CD8-positive, alpha-beta T cell (primary cell): ENCODE measurements at regions of chr5 and their contacts with region 1.

Region 1: GRCh38 chr5:34929150-34929719 is at the start of gene DNAJC21:
- DNase-seq: peak; percentile 94 to 99 (median 96)
- ATAC-seq: peak; percentile 90
- H3K4me3 ChIP-seq: peak within 1 kb of the TSS; percentile 72 to 87
- H3K4me3 Mint-ChIP-seq: peak within 1 kb of the TSS; percentile 97
- H3K27ac ChIP-seq: peak within 1 kb of the TSS; percentile 72 to 83
- H3K27ac Mint-ChIP-seq: peak within 1 kb of the TSS; percentile 94
- H3K4me1 ChIP-seq: peaks cover 27% of the 10 kb centered on the region
- H3K4me1 Mint-ChIP-seq: peaks cover 37% of the 10 kb centered on the region
- H3K27me3 ChIP-seq: no peaks in the 10 kb centered on the region
- H3K27me3 Mint-ChIP-seq: no peaks in the 10 kb centered on the region
- CTCF ChIP-seq: no peak
- total RNA-seq, gene DNAJC21: 55.7 to 56.6 TPM

Region 2: GRCh38 chr5:34007621-34008600 is 921.3 kb before region 1 on chr5 and contains the start of gene AMACR:
- CTCF ChIA-PET with region 1: no interaction called
- POLR2A ChIA-PET with region 1: no interaction called
- intact Hi-C with region 1: loop called in 1 of 2 experiments (anchors 2 kb)
- DNase-seq: peak; percentile 58 to 95 (median 89)
- ATAC-seq: peak; percentile 83
- H3K4me3 ChIP-seq: peak within 1 kb of the TSS; percentile 72 to 76
- H3K4me3 Mint-ChIP-seq: peak within 1 kb of the TSS; percentile 97
- H3K27ac ChIP-seq: peak within 1 kb of the TSS; percentile 67 to 78
- H3K27ac Mint-ChIP-seq: peak within 1 kb of the TSS; percentile 94
- H3K4me1 ChIP-seq: peaks cover 16% of the 10 kb centered on the region
- H3K4me1 Mint-ChIP-seq: peaks cover 21% of the 10 kb centered on the region
- H3K27me3 ChIP-seq: no peaks in the 10 kb centered on the region
- H3K27me3 Mint-ChIP-seq: no peaks in the 10 kb centered on the region
- CTCF ChIP-seq: no peak
- total RNA-seq, gene AMACR: 1.2 to 1.5 TPM

Region 3: GRCh38 chr5:34838785-34839714 is 90.2 kb before region 1 on chr5 and contains the start of gene TTC23L:
- CTCF ChIA-PET with region 1: no interaction called
- POLR2A ChIA-PET with region 1: interaction called, 9 read pairs
- intact Hi-C with region 1: loop called in 1 of 2 experiments (anchors 1 kb)
- DNase-seq: peak; percentile 77 to 97 (median 91)
- ATAC-seq: peak; percentile 90
- H3K4me3 ChIP-seq: peak within 1 kb of the TSS; percentile 73 to 74
- H3K4me3 Mint-ChIP-seq: peak within 1 kb of the TSS; percentile 95
- H3K27ac ChIP-seq: peak within 1 kb of the TSS; percentile 57 to 80
- H3K27ac Mint-ChIP-seq: peak within 1 kb of the TSS; percentile 96
- H3K4me1 ChIP-seq: peaks cover 3% of the 10 kb centered on the region
- H3K4me1 Mint-ChIP-seq: peaks cover 10% of the 10 kb centered on the region
- H3K27me3 ChIP-seq: peaks cover 0 to 3% of the 10 kb centered on the region in 2 experiments
- H3K27me3 Mint-ChIP-seq: no peaks in the 10 kb centered on the region
- CTCF ChIP-seq: no peak
- total RNA-seq, gene TTC23L: not detected

Region 4: DNA sequence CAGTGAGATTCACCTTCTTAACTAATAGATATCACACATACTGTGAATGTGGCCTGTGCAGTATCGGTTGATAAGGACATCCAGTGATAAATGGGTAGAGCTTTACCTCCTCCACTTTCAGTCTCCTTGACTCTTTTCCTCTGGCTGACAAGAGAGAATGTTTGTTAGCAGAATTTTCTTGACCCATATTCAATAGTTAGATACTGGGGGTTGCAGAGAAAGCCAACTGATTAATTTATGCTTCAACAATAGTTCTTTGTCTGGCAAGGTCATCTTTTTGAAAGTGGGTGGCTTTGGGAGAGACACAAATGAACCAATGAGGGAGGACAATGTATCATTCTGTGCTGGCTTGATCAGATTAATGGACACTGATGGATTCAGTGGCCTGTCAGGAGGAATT is 60.0 kb before region 1 on chr5:
- CTCF ChIA-PET with region 1: no interaction called
- POLR2A ChIA-PET with region 1: no interaction called
- intact Hi-C with region 1: no loop called
- DNase-seq: no peak
- ATAC-seq: no peak
- H3K4me3 ChIP-seq: no peak overlapping the region
- H3K4me3 Mint-ChIP-seq: no peak overlapping the region
- H3K27ac ChIP-seq: no peak overlapping the region
- H3K27ac Mint-ChIP-seq: no peak overlapping the region
- H3K4me1 ChIP-seq: no peaks in the 10 kb centered on the region
- H3K4me1 Mint-ChIP-seq: no peaks in the 10 kb centered on the region
- H3K27me3 ChIP-seq: no peaks in the 10 kb centered on the region
- H3K27me3 Mint-ChIP-seq: no peaks in the 10 kb centered on the region
- CTCF ChIP-seq: no peak

Region 5: GRCh38 chr5:34915139-34915855 is 13.9 kb before region 1 on chr5 and contains the starts of genes BRIX1 and RAD1:
- CTCF ChIA-PET with region 1: interaction called, 10 read pairs
- POLR2A ChIA-PET with region 1: interaction called, 103 read pairs
- intact Hi-C with region 1: loop called (anchors 1 kb)
- DNase-seq: peak; percentile 83 to 97 (median 93)
- ATAC-seq: peak; percentile 94
- H3K4me3 ChIP-seq: peak within 1 kb of the TSS; percentile 76 to 97
- H3K4me3 Mint-ChIP-seq: no peak within 1 kb of the TSS
- H3K27ac ChIP-seq: peak within 1 kb of the TSS; percentile 79 to 86
- H3K27ac Mint-ChIP-seq: no peak within 1 kb of the TSS
- H3K4me1 ChIP-seq: peaks cover 24% of the 10 kb centered on the region
- H3K4me1 Mint-ChIP-seq: peaks cover 37% of the 10 kb centered on the region
- H3K27me3 ChIP-seq: no peaks in the 10 kb centered on the region
- H3K27me3 Mint-ChIP-seq: no peaks in the 10 kb centered on the region
- CTCF ChIP-seq: no peak
- total RNA-seq, gene BRIX1: 34.9 to 40.9 TPM
- total RNA-seq, gene RAD1: 34.7 to 35.4 TPM

Region 6: DNA sequence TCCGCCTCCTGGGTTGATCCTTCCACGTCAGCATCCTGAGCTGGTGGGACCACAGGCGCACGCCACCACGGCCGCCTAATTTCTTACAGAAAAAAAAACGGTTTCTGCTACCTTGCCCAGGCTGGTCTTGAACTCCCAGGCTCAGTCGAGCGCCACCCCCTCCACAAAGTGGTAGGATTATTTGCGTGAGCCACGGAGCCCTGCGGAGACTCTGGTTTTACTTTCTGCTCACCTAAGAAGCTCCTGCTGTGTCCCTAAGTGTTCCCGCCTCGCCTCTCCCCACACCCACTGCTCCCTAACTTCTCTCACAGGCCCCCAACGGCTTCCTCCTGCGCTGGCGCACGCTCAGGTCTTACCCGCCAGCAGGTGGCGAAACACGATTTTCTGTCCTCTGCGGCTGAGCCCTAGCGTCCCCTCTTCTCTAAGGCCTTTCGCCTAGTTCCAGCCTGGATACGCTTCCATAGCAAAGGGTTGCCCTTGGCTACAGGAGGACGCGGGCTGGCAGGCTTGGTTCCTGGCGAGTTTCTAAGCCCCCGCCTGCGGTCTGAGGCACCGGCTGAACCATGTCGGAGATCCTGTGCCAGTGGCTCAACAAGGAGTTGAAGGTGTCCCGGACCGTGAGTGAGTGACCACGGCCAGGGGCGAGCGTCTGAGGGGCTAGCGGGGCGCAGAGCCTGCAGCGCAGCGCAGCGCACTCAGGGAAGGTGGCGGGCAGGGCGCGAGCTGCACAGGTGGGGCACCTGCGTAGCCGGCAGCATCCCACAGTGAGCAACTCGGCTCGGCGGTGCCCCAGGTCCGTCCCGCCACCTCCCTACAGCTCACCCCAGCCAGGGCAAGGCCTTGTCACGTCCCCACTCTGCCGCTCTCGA is 688.4 kb after region 1 on chr5 and contains the start of gene SPEF2:
- CTCF ChIA-PET with region 1: no interaction called
- POLR2A ChIA-PET with region 1: interaction called, 3 read pairs
- intact Hi-C with region 1: loop called in 1 of 2 experiments (anchors 5 kb)
- DNase-seq: peak; percentile 54 to 90 (median 80)
- ATAC-seq: peak; percentile 84
- H3K4me3 ChIP-seq: peak within 1 kb of the TSS; percentile 84 to 88
- H3K4me3 Mint-ChIP-seq: peak within 1 kb of the TSS; percentile 91
- H3K27ac ChIP-seq: peak within 1 kb of the TSS; percentile 60 to 63
- H3K27ac Mint-ChIP-seq: peak within 1 kb of the TSS; percentile 95
- H3K4me1 ChIP-seq: peaks cover 16% of the 10 kb centered on the region
- H3K4me1 Mint-ChIP-seq: peaks cover 31% of the 10 kb centered on the region
- H3K27me3 ChIP-seq: no peaks in the 10 kb centered on the region
- H3K27me3 Mint-ChIP-seq: no peaks in the 10 kb centered on the region
- CTCF ChIP-seq: peak; percentile 78
- total RNA-seq, gene SPEF2: 3.5 to 4.7 TPM

Region 7: GRCh38 chr5:36151434-36152323 is 1222.4 kb after region 1 on chr5 and contains the starts of genes LMBRD2 and SKP2:
- CTCF ChIA-PET with region 1: no interaction called
- POLR2A ChIA-PET with region 1: interaction called, 5 read pairs
- intact Hi-C with region 1: loop called (anchors 1 to 5 kb)
- DNase-seq: peak; percentile 94 to 99 (median 96)
- ATAC-seq: peak; percentile 95
- H3K4me3 ChIP-seq: peak within 1 kb of the TSS; percentile 82 to 94
- H3K4me3 Mint-ChIP-seq: peak within 1 kb of the TSS; percentile 92
- H3K27ac ChIP-seq: peak within 1 kb of the TSS; percentile 79 to 84
- H3K27ac Mint-ChIP-seq: peak within 1 kb of the TSS; percentile 91
- H3K4me1 ChIP-seq: peaks cover 34% of the 10 kb centered on the region
- H3K4me1 Mint-ChIP-seq: peaks cover 70% of the 10 kb centered on the region
- H3K27me3 ChIP-seq: no peaks in the 10 kb centered on the region
- H3K27me3 Mint-ChIP-seq: no peaks in the 10 kb centered on the region
- CTCF ChIP-seq: no peak
- total RNA-seq, gene LMBRD2: 2.2 to 2.4 TPM
- total RNA-seq, gene SKP2: 5.5 to 6.1 TPM

Region 8: DNA sequence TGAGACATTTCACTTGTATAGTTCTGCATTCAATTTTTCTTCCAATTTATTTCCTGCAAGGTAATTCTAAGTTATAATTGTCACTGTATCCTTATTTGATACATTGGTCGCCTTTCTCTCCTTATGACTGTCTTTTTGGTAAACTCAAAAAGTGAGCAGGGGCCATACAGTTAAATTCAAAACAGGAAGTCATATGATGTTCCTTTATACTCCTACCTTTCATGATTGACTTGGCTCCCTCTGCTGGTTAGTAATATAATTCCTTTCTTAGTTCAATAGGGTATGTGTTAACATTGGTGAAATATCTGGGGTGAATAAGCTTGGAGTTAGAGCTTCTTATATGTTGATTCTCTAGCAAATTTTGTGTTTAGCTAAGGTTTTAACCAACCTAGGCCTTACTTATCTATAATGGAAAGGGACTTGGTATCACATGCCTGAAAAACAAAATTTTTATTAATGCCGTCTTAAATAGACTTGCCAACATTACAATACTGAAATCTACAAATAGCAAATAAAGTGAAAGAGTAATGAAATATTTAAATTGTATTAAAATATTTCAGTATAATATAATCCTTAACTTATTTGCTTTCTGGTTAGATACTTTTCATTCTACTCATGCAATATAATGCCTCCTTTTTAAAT is 1941.3 kb after region 1 on chr5:
- CTCF ChIA-PET with region 1: no interaction called
- POLR2A ChIA-PET with region 1: no interaction called
- intact Hi-C with region 1: loop called (anchors 5 kb)
- DNase-seq: peak in 2 of 9 experiments; percentile 73 to 82
- ATAC-seq: peak; percentile 75
- H3K4me3 ChIP-seq: no peak overlapping the region
- H3K4me3 Mint-ChIP-seq: no peak overlapping the region
- H3K27ac ChIP-seq: no peak overlapping the region
- H3K27ac Mint-ChIP-seq: peak overlapping the region; percentile 20
- H3K4me1 ChIP-seq: peaks cover 25% of the 10 kb centered on the region
- H3K4me1 Mint-ChIP-seq: peaks cover 46% of the 10 kb centered on the region
- H3K27me3 ChIP-seq: no peaks in the 10 kb centered on the region
- H3K27me3 Mint-ChIP-seq: no peaks in the 10 kb centered on the region
- CTCF ChIP-seq: peak; percentile 67